Colonic mucosa (tissue), 4 donors: ENCODE measurements at regions of chrX and their contacts with region 1.

Region 1: DNA sequence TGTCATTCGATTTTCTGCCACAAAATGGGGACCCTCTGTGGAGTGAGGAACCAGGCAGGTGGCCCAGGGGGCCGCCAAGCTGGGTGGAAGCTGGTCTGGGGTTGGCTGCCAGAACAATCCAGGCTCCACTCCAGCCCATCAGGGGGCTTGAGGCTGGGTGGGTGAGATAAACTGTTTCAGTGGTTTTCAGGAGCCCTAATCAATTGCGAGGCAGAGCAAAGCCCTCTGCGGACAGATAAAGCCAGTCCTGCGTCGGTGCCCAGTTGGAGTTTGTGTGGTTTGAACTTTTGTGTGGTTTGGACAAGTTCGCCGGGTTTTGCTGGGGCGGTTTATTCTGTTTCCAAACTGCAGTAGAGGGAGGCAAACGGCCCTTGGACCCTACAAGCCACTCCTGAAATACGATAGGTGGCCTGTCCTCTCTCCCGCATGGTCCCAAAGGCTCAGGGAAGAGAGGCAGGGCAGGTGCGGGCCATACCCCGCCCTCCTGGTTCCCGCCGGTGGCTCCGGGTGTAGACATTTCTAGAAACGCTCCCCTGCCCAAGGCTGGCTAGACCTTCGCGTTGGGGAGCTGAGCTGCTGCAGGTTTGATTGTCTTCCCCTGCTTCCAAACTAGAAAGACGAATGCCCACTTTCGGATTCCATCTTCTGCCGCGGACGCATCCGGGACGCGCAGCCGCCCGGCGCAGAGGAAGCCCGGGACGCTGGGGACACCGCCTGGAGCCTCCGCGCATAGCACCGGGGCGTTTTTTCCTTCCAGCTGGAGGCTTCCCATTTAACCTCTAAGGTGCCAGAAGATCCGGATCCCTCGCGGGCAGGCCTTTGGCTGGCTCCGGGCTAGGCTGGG is 169.0 kb upstream of the BCOR start:
- DNase-seq: peak; percentile 77
- H3K4me3 ChIP-seq: peak overlapping the region; percentile 28
- H3K27ac ChIP-seq: no peak overlapping the region
- H3K4me1 ChIP-seq: no peaks in the 10 kb centered on the region
- H3K27me3 ChIP-seq: no peaks in the 10 kb centered on the region
- CTCF ChIP-seq: peak; percentile 54

Region 2: DNA sequence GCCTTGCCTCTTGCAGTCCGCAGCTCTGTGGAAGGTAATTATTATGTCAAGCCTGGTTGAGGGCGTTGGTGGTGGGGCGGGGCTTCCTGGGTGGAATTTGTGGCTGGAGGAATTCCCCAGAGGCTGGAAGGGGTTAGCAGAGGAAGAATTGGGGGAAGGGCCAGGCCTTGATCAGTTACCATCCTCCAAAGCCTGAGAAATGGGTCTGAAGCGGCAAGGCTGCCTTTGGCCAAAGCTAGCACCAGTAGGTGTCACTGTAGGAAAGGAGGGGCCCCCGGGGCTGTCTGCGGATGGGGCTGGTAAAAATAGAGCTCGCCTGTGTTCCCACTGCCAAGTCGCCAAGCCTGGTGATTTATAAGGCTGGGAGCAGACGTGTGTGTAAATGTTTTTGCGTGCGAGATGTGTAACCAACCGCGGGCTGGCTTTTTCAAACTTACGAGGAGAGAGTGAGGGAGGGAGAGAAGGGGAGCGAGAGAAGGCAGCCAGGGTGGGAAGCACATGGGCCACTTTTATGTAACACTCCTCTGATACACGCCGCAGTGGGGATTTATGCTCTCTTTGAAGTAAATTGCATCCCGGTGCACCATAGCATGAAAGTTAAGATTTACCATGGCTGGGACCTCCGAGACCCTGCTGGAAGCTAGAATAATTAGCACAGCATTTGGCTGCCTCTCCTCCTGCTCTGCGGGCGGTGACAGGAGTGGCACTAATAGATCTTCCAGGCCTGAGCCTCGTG is 535.9 kb before region 1 on chrX:
- intact Hi-C with region 1: loop called (anchors 5 kb)
- DNase-seq: peak; percentile 64
- H3K4me3 ChIP-seq: no peak overlapping the region
- H3K27ac ChIP-seq: no peak overlapping the region
- H3K4me1 ChIP-seq: no peaks in the 10 kb centered on the region
- H3K27me3 ChIP-seq: no peaks in the 10 kb centered on the region
- CTCF ChIP-seq: peak; percentile 34